ENCODE measurements at regions of chr6 and their contacts with region 1.

Region 1: GRCh38 chr6:154675602-154676088 is 57.6 kb upstream of the SCAF8 start:
- DNase-seq: peak; percentile 69 to 98 (median 88)

Region 2: DNA sequence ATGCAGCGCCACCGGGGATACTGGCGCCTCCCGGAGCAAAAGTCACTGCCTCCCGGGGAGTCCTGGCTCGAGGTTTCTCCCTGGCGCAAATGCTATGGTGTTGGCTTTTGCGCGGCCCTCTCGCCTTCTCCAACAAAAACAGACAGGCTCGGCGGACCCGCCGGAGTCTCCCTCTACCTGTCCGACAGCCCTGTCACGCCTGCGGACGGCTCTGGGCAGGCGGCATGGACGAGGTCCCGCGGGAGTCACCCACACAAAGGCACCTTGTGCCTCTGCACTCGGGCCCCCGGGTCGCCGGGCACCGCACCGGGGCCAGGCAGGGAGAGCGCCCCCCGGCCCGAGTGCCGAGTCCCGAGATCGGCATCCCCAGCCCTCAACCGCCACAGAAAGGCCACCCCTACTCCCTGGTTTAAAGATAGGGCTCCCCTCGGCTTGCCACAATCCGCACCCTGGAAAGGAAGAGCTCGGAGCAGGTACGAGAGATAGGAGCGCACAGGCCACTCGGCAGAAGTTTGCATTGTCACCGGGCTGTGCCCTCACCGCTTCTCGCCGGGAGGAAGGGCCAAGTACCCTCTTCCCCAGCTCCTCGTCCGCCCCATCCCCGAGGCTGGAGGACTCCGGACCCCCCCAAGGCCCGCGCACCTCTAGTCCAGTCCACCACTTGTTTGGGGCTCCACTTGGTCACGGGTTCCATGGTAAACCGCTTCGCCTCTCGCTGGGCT is 166.1 kb before region 1 on chr6:
- intact Hi-C with region 1: loop called (anchors 10 kb)
- DNase-seq: peak in 7 of 10 donors; percentile 13 to 88 (median 44)

Region 3: GRCh38 chr6:154805288-154805911 is 129.8 kb after region 1 on chr6:
- intact Hi-C with region 1: loop called (anchors 1 kb)
- DNase-seq: no peak